ENCODE measurements at regions of chr12 and their contacts with region 1.

Region 1: GRCh38 chr12:10721651-10722501 is 1.2 kb downstream of the YBX3 start:
- DNase-seq: peak; percentile 45 to 84 (median 74)
- ATAC-seq: peak; percentile 83
- H3K4me3 ChIP-seq: peak overlapping the region; percentile 83
- H3K4me3 Mint-ChIP-seq: peak overlapping the region; percentile 80 to 96 (median 93)
- H3K27ac ChIP-seq: peak overlapping the region; percentile 61
- H3K27ac Mint-ChIP-seq: peak overlapping the region; percentile 48 to 96 (median 87)
- H3K4me1 ChIP-seq: peaks cover 9 to 19% of the 10 kb centered on the region in 2 donors
- H3K4me1 Mint-ChIP-seq: peaks cover 14 to 43% (median 21%) of the 10 kb centered on the region in 7 donors
- H3K27me3 ChIP-seq: peaks cover 0 to 4% of the 10 kb centered on the region in 2 donors
- H3K27me3 Mint-ChIP-seq: peaks cover 20 to 60% (median 44%) of the 10 kb centered on the region in 5 donors

Region 2: GRCh38 chr12:10613349-10614055 is 108.4 kb before region 1 on chr12 and contains the start of gene MAGOHB:
- CTCF ChIA-PET with region 1: no interaction called
- POLR2A ChIA-PET with region 1: no interaction called
- intact Hi-C with region 1: loop called (anchors 1 kb)
- DNase-seq: peak; percentile 94 to 100 (median 97)
- ATAC-seq: peak; percentile 96
- H3K4me3 ChIP-seq: peak within 1 kb of the TSS; percentile 74
- H3K4me3 Mint-ChIP-seq: peak within 1 kb of the TSS; percentile 93 to 100 (median 98)
- H3K27ac ChIP-seq: peak within 1 kb of the TSS; percentile 93
- H3K27ac Mint-ChIP-seq: peak within 1 kb of the TSS; percentile 97 to 100 (median 100)
- H3K4me1 ChIP-seq: peaks cover 4 to 11% of the 10 kb centered on the region in 2 donors
- H3K4me1 Mint-ChIP-seq: peaks cover 12 to 38% (median 33%) of the 10 kb centered on the region in 7 donors
- H3K27me3 ChIP-seq: no peaks in the 10 kb centered on the region
- H3K27me3 Mint-ChIP-seq: peaks cover 0 to 26% (median 7%) of the 10 kb centered on the region in 5 donors
- total RNA-seq, gene MAGOHB: 12.1 to 43.1 (median 24.8) TPM

Region 3: GRCh38 chr12:10701131-10701681 is 20.7 kb before region 1 on chr12:
- CTCF ChIA-PET with region 1: no interaction called
- POLR2A ChIA-PET with region 1: no interaction called
- intact Hi-C with region 1: loop called in 1 of 2 experiments (anchors 2 kb)
- DNase-seq: peak in 1 of 9 donors; percentile 38
- ATAC-seq: peak; percentile 49
- H3K4me3 ChIP-seq: no peak overlapping the region
- H3K4me3 Mint-ChIP-seq: peak overlapping the region in 3 of 10 donors; percentile 11 to 50 (median 50)
- H3K27ac ChIP-seq: no peak overlapping the region
- H3K27ac Mint-ChIP-seq: peak overlapping the region in 3 of 9 donors; percentile 57 to 73 (median 68)
- H3K4me1 ChIP-seq: peaks cover 0 to 10% of the 10 kb centered on the region in 2 donors
- H3K4me1 Mint-ChIP-seq: peaks cover 0 to 15% (median 12%) of the 10 kb centered on the region in 7 donors
- H3K27me3 ChIP-seq: no peaks in the 10 kb centered on the region
- H3K27me3 Mint-ChIP-seq: no peaks in the 10 kb centered on the region

Measured in naive thymus-derived CD4-positive, alpha-beta T cell (primary cell).